WTC11 (cell line): ENCODE measurements at regions of chr21 and their contacts with region 1.

Region 1: GRCh38 chr21:44370027-44370735 is 16.8 kb downstream of the TRPM2 start:
- DNase-seq: peak; percentile 71
- ATAC-seq: peak; percentile 75
- H3K4me3 Mint-ChIP-seq: peak overlapping the region; percentile 50
- H3K27ac Mint-ChIP-seq: no peak overlapping the region
- H3K4me1 Mint-ChIP-seq: peaks cover 10% of the 10 kb centered on the region; the same call in 1 of the 2 replicates
- H3K27me3 Mint-ChIP-seq: peaks cover 36% of the 10 kb centered on the region
- CTCF ChIP-seq: no peak

Region 2: GRCh38 chr21:44485254-44485793 is 115.1 kb after region 1 on chr21:
- CTCF ChIA-PET with region 1: interaction called, 17 read pairs
- POLR2A ChIA-PET with region 1: no interaction called
- DNase-seq: peak; percentile 82
- ATAC-seq: peak; percentile 85
- H3K4me3 Mint-ChIP-seq: peak overlapping the region; percentile 85
- H3K27ac Mint-ChIP-seq: no peak overlapping the region
- H3K4me1 Mint-ChIP-seq: peaks cover 27% of the 10 kb centered on the region
- H3K27me3 Mint-ChIP-seq: no peaks in the 10 kb centered on the region; the same call in 1 of the 2 replicates
- CTCF ChIP-seq: no peak